Activated CD4-positive, alpha-beta memory T cell treated with anti-CD3 and anti-CD28 coated beads, Interleukin-2, amount 10 ng/mL, durations not matched to agents 7 days and 5 days (primary cell): ENCODE measurements at regions of chr7 and their contacts with region 1.

Region 1: GRCh38 chr7:38369816-38370493 is 96.5 kb upstream of the TARP start:
- DNase-seq: peak; percentile 75
- H3K4me3 Mint-ChIP-seq: no peak overlapping the region
- H3K27ac Mint-ChIP-seq: no peak overlapping the region
- H3K4me1 Mint-ChIP-seq: peaks cover 46% of the 10 kb centered on the region
- H3K27me3 Mint-ChIP-seq: no peaks in the 10 kb centered on the region

Region 2: GRCh38 chr7:38107486-38107893 is 262.5 kb before region 1 on chr7:
- CTCF ChIA-PET with region 1: interaction called, 69 read pairs
- POLR2A ChIA-PET with region 1: no interaction called
- DNase-seq: peak; percentile 69
- H3K4me3 Mint-ChIP-seq: no peak overlapping the region
- H3K27ac Mint-ChIP-seq: no peak overlapping the region
- H3K4me1 Mint-ChIP-seq: no peaks in the 10 kb centered on the region
- H3K27me3 Mint-ChIP-seq: peaks cover 27% of the 10 kb centered on the region

Region 3: GRCh38 chr7:38195804-38196595 is 174.0 kb before region 1 on chr7:
- CTCF ChIA-PET with region 1: interaction called, 15 read pairs
- POLR2A ChIA-PET with region 1: no interaction called
- DNase-seq: no peak
- H3K4me3 Mint-ChIP-seq: no peak overlapping the region
- H3K27ac Mint-ChIP-seq: no peak overlapping the region
- H3K4me1 Mint-ChIP-seq: peaks cover 6% of the 10 kb centered on the region
- H3K27me3 Mint-ChIP-seq: no peaks in the 10 kb centered on the region

Region 4: DNA sequence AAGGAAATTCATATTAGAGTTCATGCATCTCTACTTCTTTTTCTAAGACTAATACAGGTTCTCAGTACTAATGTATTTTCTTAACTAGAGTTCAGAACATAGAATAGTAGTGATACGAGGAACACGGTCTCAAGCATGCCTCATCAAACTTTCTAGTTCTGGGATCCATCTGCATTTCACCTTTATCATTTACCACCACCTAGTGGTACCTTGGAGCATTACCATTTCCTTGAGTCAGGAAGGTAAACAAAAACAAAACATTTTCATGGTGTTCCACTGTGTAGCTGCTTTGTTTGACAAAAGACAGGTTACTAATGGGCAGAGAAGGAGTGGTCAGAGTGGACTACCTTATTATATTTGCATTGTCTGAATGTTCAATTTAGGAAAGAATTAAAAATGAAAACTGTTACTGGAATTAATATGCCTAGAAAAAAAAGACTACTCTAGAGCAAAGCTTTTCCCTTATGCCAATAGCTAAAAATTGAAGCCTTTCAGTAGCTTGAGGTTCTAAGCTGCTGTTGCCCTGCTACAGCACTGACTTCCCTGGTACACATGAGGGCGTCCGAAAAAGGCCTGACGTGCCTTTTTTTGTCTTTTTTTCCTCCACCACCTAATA is 147.4 kb before region 1 on chr7:
- CTCF ChIA-PET with region 1: interaction called, 314 read pairs
- POLR2A ChIA-PET with region 1: no interaction called
- DNase-seq: no peak
- H3K4me3 Mint-ChIP-seq: no peak overlapping the region
- H3K27ac Mint-ChIP-seq: peak overlapping the region; percentile 36
- H3K4me1 Mint-ChIP-seq: peaks cover 45% of the 10 kb centered on the region
- H3K27me3 Mint-ChIP-seq: no peaks in the 10 kb centered on the region

Region 5: GRCh38 chr7:38311329-38311937 is 58.5 kb before region 1 on chr7:
- CTCF ChIA-PET with region 1: no interaction called
- POLR2A ChIA-PET with region 1: no interaction called
- DNase-seq: no peak
- H3K4me3 Mint-ChIP-seq: peak overlapping the region; percentile 74
- H3K27ac Mint-ChIP-seq: peak overlapping the region; percentile 77
- H3K4me1 Mint-ChIP-seq: peaks cover 38% of the 10 kb centered on the region
- H3K27me3 Mint-ChIP-seq: no peaks in the 10 kb centered on the region

Region 6: GRCh38 chr7:38335492-38336147 is 34.3 kb before region 1 on chr7:
- CTCF ChIA-PET with region 1: interaction called, 30 read pairs
- POLR2A ChIA-PET with region 1: no interaction called
- DNase-seq: peak; percentile 85
- H3K4me3 Mint-ChIP-seq: peak overlapping the region; percentile 75
- H3K27ac Mint-ChIP-seq: peak overlapping the region; percentile 74
- H3K4me1 Mint-ChIP-seq: peaks cover 56% of the 10 kb centered on the region
- H3K27me3 Mint-ChIP-seq: no peaks in the 10 kb centered on the region

Region 7: DNA sequence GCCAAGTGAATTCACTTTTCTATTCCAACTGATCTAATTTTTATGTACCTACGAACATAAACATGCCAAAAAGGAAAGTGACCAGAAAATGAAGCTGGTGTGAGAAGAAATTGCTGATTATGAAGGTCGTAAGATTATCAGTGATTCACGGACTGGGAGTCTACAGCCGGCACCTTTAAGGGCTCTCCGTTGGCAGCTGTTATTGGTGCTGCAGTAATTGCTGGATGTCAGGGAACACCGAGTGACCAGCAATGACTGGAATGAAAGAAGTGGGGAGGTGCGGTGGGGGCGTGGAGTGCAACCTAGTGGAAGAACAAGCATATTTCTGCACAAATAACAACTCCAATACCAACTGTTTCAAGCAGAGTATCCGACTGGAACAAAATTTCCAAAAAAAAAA is 13.3 kb after region 1 on chr7:
- CTCF ChIA-PET with region 1: interaction called, 47 read pairs
- POLR2A ChIA-PET with region 1: interaction called, 3 read pairs
- DNase-seq: no peak
- H3K4me3 Mint-ChIP-seq: no peak overlapping the region
- H3K27ac Mint-ChIP-seq: no peak overlapping the region
- H3K4me1 Mint-ChIP-seq: no peaks in the 10 kb centered on the region
- H3K27me3 Mint-ChIP-seq: no peaks in the 10 kb centered on the region

Region 8: GRCh38 chr7:38398725-38399321 is 28.9 kb after region 1 on chr7:
- CTCF ChIA-PET with region 1: interaction called, 16 read pairs
- POLR2A ChIA-PET with region 1: no interaction called
- DNase-seq: peak; percentile 51
- H3K4me3 Mint-ChIP-seq: no peak overlapping the region
- H3K27ac Mint-ChIP-seq: no peak overlapping the region
- H3K4me1 Mint-ChIP-seq: peaks cover 4% of the 10 kb centered on the region
- H3K27me3 Mint-ChIP-seq: peaks cover 16% of the 10 kb centered on the region

Region 9: GRCh38 chr7:38731195-38731594 is 361.2 kb after region 1 on chr7:
- CTCF ChIA-PET with region 1: no interaction called
- POLR2A ChIA-PET with region 1: no interaction called
- DNase-seq: no peak
- H3K4me3 Mint-ChIP-seq: no peak overlapping the region
- H3K27ac Mint-ChIP-seq: no peak overlapping the region
- H3K4me1 Mint-ChIP-seq: no peaks in the 10 kb centered on the region
- H3K27me3 Mint-ChIP-seq: no peaks in the 10 kb centered on the region